ENCODE measurements at regions of chr1 and their contacts with region 1.

Region 1: GRCh38 chr1:46148318-46148717 is 15.9 kb upstream of the PIK3R3 start:
- DNase-seq: no peak
- H3K4me3 ChIP-seq: no peak overlapping the region
- H3K27ac ChIP-seq: no peak overlapping the region
- H3K4me1 ChIP-seq: no peaks in the 10 kb centered on the region
- H3K27me3 ChIP-seq: no peaks in the 10 kb centered on the region
- CTCF ChIP-seq: no peak
- EP300 ChIP-seq: no peak
- POLR2A ChIP-seq: no peak
- RAD21 ChIP-seq: no peak

Region 2: DNA sequence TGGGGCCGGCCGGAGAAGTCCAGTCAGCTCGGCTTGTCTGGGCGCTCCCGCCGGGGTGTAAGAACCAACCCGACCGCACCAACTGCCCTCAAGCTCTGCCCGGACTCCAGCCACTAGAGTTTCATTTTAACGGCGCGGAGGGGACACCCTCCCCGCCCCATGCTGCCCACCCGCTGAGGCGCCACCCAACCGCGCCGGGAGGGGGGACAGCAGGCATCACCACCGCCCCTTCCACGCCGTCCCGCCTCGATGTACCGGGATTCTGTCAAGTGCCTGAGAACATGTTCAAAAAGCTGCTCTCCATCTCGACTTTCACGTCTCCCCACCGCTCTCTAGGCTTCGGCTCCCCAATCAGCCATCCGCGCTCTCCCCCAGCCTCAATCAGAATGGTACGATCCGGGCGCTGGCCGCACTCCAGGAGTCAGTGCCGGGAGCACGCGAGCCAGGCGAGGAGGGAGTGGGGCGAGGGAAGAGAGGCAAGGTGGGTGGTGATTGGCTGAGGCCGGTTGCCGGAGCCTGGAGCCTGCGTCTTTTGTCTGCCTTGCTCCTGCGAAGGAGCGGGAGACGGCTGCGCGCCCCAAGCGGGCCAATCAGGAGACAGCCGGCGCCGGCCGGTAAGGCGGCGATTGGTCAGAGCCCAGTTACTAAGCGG is 15.7 kb before region 1 on chr1 and contains the start of gene PIK3R3:
- CTCF ChIA-PET with region 1: interaction called, 5 read pairs
- POLR2A ChIA-PET with region 1: interaction called, 16 read pairs
- DNase-seq: peak; percentile 93 to 98
- H3K4me3 ChIP-seq: peak within 1 kb of the TSS; percentile 58 to 89 (median 74)
- H3K27ac ChIP-seq: peak within 1 kb of the TSS; percentile 100
- H3K4me1 ChIP-seq: peaks cover 0 to 8% (median 5%) of the 10 kb centered on the region in 4 experiments; a peak in 5 of 7 replicates
- H3K27me3 ChIP-seq: no peaks in the 10 kb centered on the region
- CTCF ChIP-seq: no peak
- EP300 ChIP-seq: peak in 1 of 2 experiments; percentile 99; a peak in 2 of 3 replicates
- POLR2A ChIP-seq: peak; percentile 86 to 97
- RAD21 ChIP-seq: no peak
- total RNA-seq, gene PIK3R3: 13.5 and 13.6 TPM in 2 replicates

Region 3: DNA sequence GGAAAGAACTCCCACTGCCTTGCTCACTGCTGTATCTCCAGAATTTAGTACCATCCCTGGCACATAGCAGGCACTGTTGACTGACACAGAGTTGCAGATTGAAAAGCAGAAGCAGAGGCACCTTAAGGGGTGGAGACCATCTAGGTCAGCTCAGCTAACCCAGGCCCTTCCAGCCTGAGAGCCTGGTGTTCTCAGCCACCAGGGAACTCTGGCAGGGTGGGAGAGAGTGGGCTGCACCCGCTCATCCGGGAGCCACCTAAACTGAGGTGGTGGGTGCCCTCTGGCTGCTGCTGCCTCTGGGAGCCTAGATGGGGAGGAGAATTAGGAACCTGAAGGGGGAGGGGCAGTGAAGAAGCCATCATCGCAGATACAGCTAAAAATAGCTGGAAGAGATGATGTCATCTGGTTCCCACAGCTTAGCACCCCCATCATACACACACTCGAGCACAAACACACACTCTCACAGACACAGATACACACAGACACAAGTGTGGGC is 25.1 kb after region 1 on chr1:
- CTCF ChIA-PET with region 1: no interaction called
- POLR2A ChIA-PET with region 1: no interaction called
- DNase-seq: no peak
- H3K4me3 ChIP-seq: no peak overlapping the region
- H3K27ac ChIP-seq: no peak overlapping the region
- H3K4me1 ChIP-seq: peaks cover 3 to 19% (median 12%) of the 10 kb centered on the region in 4 experiments
- H3K27me3 ChIP-seq: peaks cover 0 to 1% (median under 1%) of the 10 kb centered on the region in 4 experiments; a peak in 3 of 7 replicates
- CTCF ChIP-seq: peak in 1 of 3 experiments; percentile 14; a peak in 1 of 4 replicates
- EP300 ChIP-seq: no peak
- POLR2A ChIP-seq: no peak
- RAD21 ChIP-seq: peak in 1 of 2 experiments; percentile 23; a peak in 3 of 4 replicates

Measured in H1 (cell line).